ENCODE measurements at regions of chr17 and their contacts with region 1.

Region 1: GRCh38 chr17:36148559-36149295 is 27.7 kb downstream of the TBC1D3B start:
- DNase-seq: peak; percentile 83
- ATAC-seq: peak; percentile 86
- H3K4me3 ChIP-seq: no peak overlapping the region
- H3K4me3 Mint-ChIP-seq: no peak overlapping the region
- H3K27ac ChIP-seq: no peak overlapping the region
- H3K27ac Mint-ChIP-seq: peak overlapping the region; percentile 5
- H3K4me1 ChIP-seq: peaks cover 15 to 21% of the 10 kb centered on the region in 2 donors
- H3K4me1 Mint-ChIP-seq: peaks cover 40% of the 10 kb centered on the region
- H3K27me3 ChIP-seq: peaks cover 0 to 11% (median 0%) of the 10 kb centered on the region in 4 experiments
- H3K27me3 Mint-ChIP-seq: peaks cover 11% of the 10 kb centered on the region
- CTCF ChIP-seq: peak; percentile 100

Region 2: DNA sequence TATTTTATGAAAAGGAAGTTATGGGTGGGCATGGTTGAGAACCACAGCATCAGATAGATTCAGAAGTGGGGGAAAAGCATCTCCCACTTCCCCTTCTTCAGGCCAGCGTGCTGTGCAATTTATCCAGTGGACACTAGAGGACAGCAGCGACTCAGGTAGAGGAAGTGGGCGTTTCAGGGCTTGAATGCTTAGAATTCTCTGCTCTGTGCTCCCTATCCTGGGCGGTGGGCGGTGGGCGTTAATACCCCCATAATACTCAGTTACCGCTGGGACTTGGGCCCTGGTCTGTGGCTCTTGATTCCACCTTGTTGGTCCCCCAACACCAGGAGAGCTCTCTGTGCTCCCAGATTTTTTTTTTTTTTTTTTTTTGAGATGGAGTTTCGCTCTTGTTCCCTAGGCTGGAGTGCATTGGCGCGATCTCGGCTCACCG is 201.6 kb before region 1 on chr17:
- CTCF ChIA-PET with region 1: interaction called, 15 read pairs
- POLR2A ChIA-PET with region 1: no interaction called
- intact Hi-C with region 1: no loop called
- DNase-seq: peak; percentile 74
- ATAC-seq: peak; percentile 91
- H3K4me3 ChIP-seq: no peak overlapping the region
- H3K4me3 Mint-ChIP-seq: no peak overlapping the region
- H3K27ac ChIP-seq: no peak overlapping the region
- H3K27ac Mint-ChIP-seq: no peak overlapping the region
- H3K4me1 ChIP-seq: peaks cover 0 to 4% of the 10 kb centered on the region in 2 donors
- H3K4me1 Mint-ChIP-seq: peaks cover 2% of the 10 kb centered on the region
- H3K27me3 ChIP-seq: no peaks in the 10 kb centered on the region
- H3K27me3 Mint-ChIP-seq: peaks cover 7% of the 10 kb centered on the region
- CTCF ChIP-seq: peak; percentile 74

Region 3: GRCh38 chr17:35991075-35991474 is 157.7 kb before region 1 on chr17:
- CTCF ChIA-PET with region 1: interaction called, 12 read pairs
- POLR2A ChIA-PET with region 1: no interaction called
- intact Hi-C with region 1: no loop called
- DNase-seq: no peak
- ATAC-seq: no peak
- H3K4me3 ChIP-seq: no peak overlapping the region
- H3K4me3 Mint-ChIP-seq: no peak overlapping the region
- H3K27ac ChIP-seq: no peak overlapping the region
- H3K27ac Mint-ChIP-seq: no peak overlapping the region
- H3K4me1 ChIP-seq: peaks cover 9 to 11% of the 10 kb centered on the region in 2 donors
- H3K4me1 Mint-ChIP-seq: peaks cover 19% of the 10 kb centered on the region
- H3K27me3 ChIP-seq: no peaks in the 10 kb centered on the region
- H3K27me3 Mint-ChIP-seq: peaks cover 7% of the 10 kb centered on the region
- CTCF ChIP-seq: no peak

Region 4: GRCh38 chr17:36072431-36073121 is 76.2 kb before region 1 on chr17:
- CTCF ChIA-PET with region 1: interaction called, 64 read pairs
- POLR2A ChIA-PET with region 1: no interaction called
- intact Hi-C with region 1: loop called (anchors 1 kb)
- DNase-seq: peak; percentile 64
- ATAC-seq: peak; percentile 47
- H3K4me3 ChIP-seq: no peak overlapping the region
- H3K4me3 Mint-ChIP-seq: no peak overlapping the region
- H3K27ac ChIP-seq: no peak overlapping the region
- H3K27ac Mint-ChIP-seq: no peak overlapping the region
- H3K4me1 ChIP-seq: peaks cover 4 to 8% of the 10 kb centered on the region in 2 donors
- H3K4me1 Mint-ChIP-seq: peaks cover 14% of the 10 kb centered on the region
- H3K27me3 ChIP-seq: no peaks in the 10 kb centered on the region
- H3K27me3 Mint-ChIP-seq: no peaks in the 10 kb centered on the region
- CTCF ChIP-seq: peak; percentile 71

Region 5: DNA sequence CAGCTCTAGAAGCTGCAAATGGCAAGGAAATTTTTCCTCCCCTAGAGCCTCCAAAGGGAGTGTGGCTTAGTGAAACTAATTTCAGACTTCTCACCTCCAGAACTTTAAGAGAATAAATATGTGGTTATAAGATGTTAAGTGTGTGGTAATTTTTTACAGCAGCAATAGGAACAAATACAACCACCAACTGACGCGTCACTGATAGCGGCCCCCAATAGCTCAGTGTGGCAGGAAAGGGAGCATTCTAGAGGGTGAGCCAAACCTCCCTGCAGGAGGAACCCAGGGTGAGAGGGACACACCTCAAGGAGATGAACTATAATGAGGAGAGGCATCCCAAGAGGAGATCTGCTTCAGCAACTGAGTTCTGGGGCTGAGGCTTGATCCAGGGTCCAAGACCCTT is 41.1 kb before region 1 on chr17:
- CTCF ChIA-PET with region 1: interaction called, 18 read pairs
- POLR2A ChIA-PET with region 1: no interaction called
- intact Hi-C with region 1: no loop called
- DNase-seq: no peak
- ATAC-seq: no peak
- H3K4me3 ChIP-seq: no peak overlapping the region
- H3K4me3 Mint-ChIP-seq: no peak overlapping the region
- H3K27ac ChIP-seq: no peak overlapping the region
- H3K27ac Mint-ChIP-seq: no peak overlapping the region
- H3K4me1 ChIP-seq: peaks cover 36 to 51% of the 10 kb centered on the region in 2 donors
- H3K4me1 Mint-ChIP-seq: peaks cover 55% of the 10 kb centered on the region
- H3K27me3 ChIP-seq: peaks cover 0 to 9% (median 0%) of the 10 kb centered on the region in 4 experiments
- H3K27me3 Mint-ChIP-seq: peaks cover 27% of the 10 kb centered on the region
- CTCF ChIP-seq: no peak

Region 6: GRCh38 chr17:36133602-36134236 is 15.0 kb before region 1 on chr17:
- CTCF ChIA-PET with region 1: interaction called, 71 read pairs
- POLR2A ChIA-PET with region 1: no interaction called
- intact Hi-C with region 1: no loop called
- DNase-seq: no peak
- ATAC-seq: no peak
- H3K4me3 ChIP-seq: no peak overlapping the region
- H3K4me3 Mint-ChIP-seq: no peak overlapping the region
- H3K27ac ChIP-seq: no peak overlapping the region
- H3K27ac Mint-ChIP-seq: peak overlapping the region; percentile 8
- H3K4me1 ChIP-seq: peaks cover 82 to 86% of the 10 kb centered on the region in 2 donors
- H3K4me1 Mint-ChIP-seq: peaks cover 76% of the 10 kb centered on the region
- H3K27me3 ChIP-seq: no peaks in the 10 kb centered on the region
- H3K27me3 Mint-ChIP-seq: no peaks in the 10 kb centered on the region
- CTCF ChIP-seq: no peak

Region 7: DNA sequence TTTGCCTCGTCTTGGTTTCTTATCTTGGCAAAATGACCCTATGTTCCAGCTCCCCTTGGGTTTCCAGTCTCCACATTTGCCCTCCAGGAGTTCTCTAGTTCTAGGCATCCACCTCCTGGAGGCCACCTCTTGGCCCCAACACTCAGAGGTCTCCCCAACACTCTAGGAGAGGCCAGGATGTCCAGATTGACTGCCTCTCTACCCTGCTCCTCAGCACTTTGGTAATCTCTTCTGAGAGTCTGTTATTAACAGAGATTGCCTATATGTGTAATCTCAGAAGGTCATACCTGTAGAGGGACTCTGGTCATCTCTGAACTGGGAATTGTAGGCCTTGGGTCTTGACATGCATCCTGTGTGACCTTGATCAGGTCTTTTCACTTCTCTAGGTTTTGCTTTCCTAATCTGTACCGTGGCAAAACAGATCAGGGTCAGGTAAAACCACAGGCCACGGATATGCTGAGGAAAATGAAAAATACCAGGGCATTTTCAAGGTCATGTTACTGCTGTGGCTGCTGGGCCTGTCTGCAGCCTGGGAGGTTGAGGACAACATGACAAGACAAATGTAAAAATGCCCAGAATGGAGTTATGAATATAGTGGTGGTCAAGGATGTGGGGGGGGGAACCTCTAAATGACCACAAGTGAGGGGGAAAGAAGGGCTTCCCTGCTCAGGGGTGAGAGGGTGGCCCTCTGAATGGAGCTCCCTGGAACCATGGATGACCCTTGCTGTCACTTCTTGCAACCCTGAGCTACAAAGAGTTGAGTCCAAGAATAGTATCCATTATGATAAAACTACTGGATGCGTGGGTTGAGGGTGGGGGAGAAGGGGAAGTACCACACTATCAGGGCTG is 57.1 kb after region 1 on chr17:
- CTCF ChIA-PET with region 1: no interaction called
- POLR2A ChIA-PET with region 1: no interaction called
- intact Hi-C with region 1: no loop called
- DNase-seq: no peak
- ATAC-seq: no peak
- H3K4me3 ChIP-seq: no peak overlapping the region
- H3K4me3 Mint-ChIP-seq: no peak overlapping the region
- H3K27ac ChIP-seq: no peak overlapping the region
- H3K27ac Mint-ChIP-seq: no peak overlapping the region
- H3K4me1 ChIP-seq: peaks cover 63 to 65% of the 10 kb centered on the region in 2 donors
- H3K4me1 Mint-ChIP-seq: peaks cover 48% of the 10 kb centered on the region
- H3K27me3 ChIP-seq: peaks cover 0 to 44% (median 0%) of the 10 kb centered on the region in 4 experiments
- H3K27me3 Mint-ChIP-seq: peaks cover 21% of the 10 kb centered on the region
- CTCF ChIP-seq: no peak

Region 8: GRCh38 chr17:36791150-36791941 is 642.6 kb after region 1 on chr17:
- CTCF ChIA-PET with region 1: no interaction called
- POLR2A ChIA-PET with region 1: no interaction called
- intact Hi-C with region 1: no loop called
- DNase-seq: no peak
- ATAC-seq: no peak
- H3K4me3 ChIP-seq: no peak overlapping the region
- H3K4me3 Mint-ChIP-seq: no peak overlapping the region
- H3K27ac ChIP-seq: no peak overlapping the region
- H3K27ac Mint-ChIP-seq: no peak overlapping the region
- H3K4me1 ChIP-seq: no peaks in the 10 kb centered on the region
- H3K4me1 Mint-ChIP-seq: no peaks in the 10 kb centered on the region
- H3K27me3 ChIP-seq: peaks cover 0 to 13% (median 0%) of the 10 kb centered on the region in 4 experiments
- H3K27me3 Mint-ChIP-seq: peaks cover 39% of the 10 kb centered on the region
- CTCF ChIP-seq: no peak